ENCODE measurements at regions of chr4 and their contacts with region 1.

Region 1: GRCh38 chr4:139950568-139950967 is 203.4 kb downstream of the MAML3 start:
- DNase-seq: peak; percentile 45 to 48
- ATAC-seq: peak; percentile 86 to 98 (median 88)
- H3K4me3 ChIP-seq: no peak overlapping the region
- H3K4me3 Mint-ChIP-seq: peak overlapping the region; percentile 72
- H3K27ac ChIP-seq: peak overlapping the region; percentile 22
- H3K27ac Mint-ChIP-seq: peak overlapping the region; percentile 70 to 80
- H3K4me1 ChIP-seq: peaks cover 26% of the 10 kb centered on the region
- H3K4me1 Mint-ChIP-seq: peaks cover 38% of the 10 kb centered on the region in 2 donors
- H3K27me3 ChIP-seq: peaks cover 3% of the 10 kb centered on the region
- H3K27me3 Mint-ChIP-seq: peaks cover 45 to 46% of the 10 kb centered on the region in 2 donors
- CTCF ChIP-seq: no peak

Region 2: GRCh38 chr4:140071806-140072205 is 121.2 kb after region 1 on chr4:
- intact Hi-C with region 1: loop called (anchors 5 kb)
- DNase-seq: peak; percentile 48 to 85
- ATAC-seq: peak; percentile 82 to 97 (median 87)
- H3K4me3 ChIP-seq: no peak overlapping the region
- H3K4me3 Mint-ChIP-seq: peak overlapping the region; percentile 83
- H3K27ac ChIP-seq: peak overlapping the region; percentile 31
- H3K27ac Mint-ChIP-seq: peak overlapping the region; percentile 67 to 73
- H3K4me1 ChIP-seq: peaks cover 27% of the 10 kb centered on the region
- H3K4me1 Mint-ChIP-seq: peaks cover 22 to 26% of the 10 kb centered on the region in 2 donors
- H3K27me3 ChIP-seq: peaks cover 3% of the 10 kb centered on the region
- H3K27me3 Mint-ChIP-seq: peaks cover 58 to 76% of the 10 kb centered on the region in 2 donors
- CTCF ChIP-seq: no peak